ENCODE measurements at regions of chr3 and their contacts with region 1.

Region 1: DNA sequence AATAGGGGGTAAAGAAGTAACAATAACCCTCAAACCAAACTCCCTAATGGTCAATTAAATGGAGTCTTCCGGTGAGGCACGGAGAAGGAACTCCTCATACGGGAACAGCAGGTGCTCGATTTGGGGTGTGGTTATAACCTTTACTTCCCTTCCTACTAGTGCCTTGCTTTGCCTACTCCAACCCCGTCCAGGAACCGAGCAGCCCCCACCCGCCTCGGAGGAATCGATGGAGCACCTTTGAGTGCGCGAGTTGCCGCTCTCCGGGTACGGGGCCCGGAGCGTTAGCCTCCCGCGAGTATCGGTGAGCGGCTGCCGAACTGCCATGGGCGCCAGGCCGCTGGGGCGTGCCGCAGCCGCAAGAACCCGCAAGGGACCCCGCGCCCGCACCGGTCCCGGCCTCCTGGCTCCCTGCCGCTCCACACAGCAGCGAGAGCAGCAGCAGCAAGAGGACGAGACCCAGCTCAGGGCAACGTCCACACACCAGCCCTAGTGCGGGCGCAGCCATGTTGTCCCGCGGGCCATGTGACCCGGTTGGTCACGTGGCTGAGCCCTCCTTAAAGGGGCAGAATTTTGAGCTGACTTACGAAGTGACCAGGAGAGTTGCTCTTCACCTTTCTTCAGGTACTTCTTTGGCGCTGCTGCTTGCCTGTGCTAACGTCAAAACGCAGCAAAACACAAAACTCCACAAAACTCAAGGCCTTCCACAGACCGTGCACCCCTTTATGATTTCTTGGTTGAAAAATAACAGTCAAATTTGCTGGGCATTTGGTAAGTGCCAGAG is at the start of gene SUMF1:
- DNase-seq: peak; percentile 46 to 90
- H3K4me3 ChIP-seq: peak within 1 kb of the TSS; percentile 70
- H3K27ac ChIP-seq: peak within 1 kb of the TSS; percentile 48 to 75
- H3K4me1 ChIP-seq: peaks cover 4 to 11% of the 10 kb centered on the region in 2 donors
- H3K27me3 ChIP-seq: no peaks in the 10 kb centered on the region
- CTCF ChIP-seq: no peak
- total RNA-seq, gene SUMF1: 98.4 TPM

Region 2: GRCh38 chr3:4478261-4478660 is 11.3 kb after region 1 on chr3:
- intact Hi-C with region 1: no loop called
- DNase-seq: no peak
- H3K4me3 ChIP-seq: no peak overlapping the region
- H3K27ac ChIP-seq: no peak overlapping the region
- H3K4me1 ChIP-seq: peaks cover 0 to 10% of the 10 kb centered on the region in 2 donors
- H3K27me3 ChIP-seq: no peaks in the 10 kb centered on the region
- CTCF ChIP-seq: no peak

Region 3: DNA sequence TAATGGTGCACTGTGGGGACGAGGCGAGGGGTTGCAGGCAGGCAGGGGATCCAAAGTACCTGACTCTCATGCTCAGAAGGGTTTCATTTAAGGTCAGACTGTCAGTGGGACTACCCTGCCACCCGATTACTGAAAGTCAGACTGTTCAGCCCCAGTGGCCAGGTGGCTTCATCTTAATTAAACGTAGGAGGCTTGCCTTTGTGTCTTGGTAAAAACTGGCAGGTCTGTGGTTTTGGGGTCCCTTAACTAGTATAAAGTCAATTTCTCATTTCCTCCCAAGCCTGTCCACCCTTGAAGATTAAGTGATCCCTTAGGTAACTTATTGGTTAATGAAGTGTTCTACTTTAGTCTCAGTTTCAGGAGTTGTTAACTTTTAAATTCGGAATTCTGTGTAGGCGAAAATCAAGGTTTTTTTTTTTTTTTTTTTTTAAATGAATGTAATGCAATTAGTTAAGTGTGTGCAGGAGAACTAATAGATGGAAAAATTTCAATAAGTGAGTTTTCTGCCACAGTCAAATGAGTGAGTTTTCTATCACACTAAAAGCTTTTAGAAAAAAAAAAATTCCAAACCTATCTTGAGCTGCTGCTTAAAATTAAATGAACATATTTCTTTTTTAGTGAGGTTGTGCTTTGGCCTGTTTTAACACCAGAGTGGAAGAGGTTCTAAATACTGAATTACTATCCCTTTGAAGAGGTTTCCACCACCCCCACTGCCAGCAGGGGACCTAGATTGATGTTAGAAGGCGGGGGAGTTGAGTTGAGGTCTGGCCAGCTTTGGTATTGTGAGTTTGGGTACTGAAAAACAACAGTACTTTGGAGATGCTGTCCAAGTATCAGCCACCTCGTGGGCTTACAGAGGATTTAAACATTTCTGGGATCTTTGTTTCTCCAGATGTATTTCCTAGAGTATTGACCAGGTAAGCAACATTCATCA is 41.4 kb after region 1 on chr3:
- intact Hi-C with region 1: no loop called
- DNase-seq: no peak
- H3K4me3 ChIP-seq: no peak overlapping the region
- H3K27ac ChIP-seq: no peak overlapping the region
- H3K4me1 ChIP-seq: peaks cover 10 to 32% of the 10 kb centered on the region in 2 donors
- H3K27me3 ChIP-seq: no peaks in the 10 kb centered on the region
- CTCF ChIP-seq: no peak

Region 4: GRCh38 chr3:4584456-4585249 is 117.7 kb after region 1 on chr3:
- intact Hi-C with region 1: loop called (anchors 1 kb)
- DNase-seq: no peak
- H3K4me3 ChIP-seq: peak overlapping the region; percentile 43 to 57
- H3K27ac ChIP-seq: peak overlapping the region; percentile 84 to 86
- H3K4me1 ChIP-seq: peaks cover 0 to 41% of the 10 kb centered on the region in 2 donors
- H3K27me3 ChIP-seq: no peaks in the 10 kb centered on the region
- CTCF ChIP-seq: peak in 2 of 3 experiments; percentile 39 to 55

Region 5: GRCh38 chr3:4687167-4687566 is 220.2 kb after region 1 on chr3:
- intact Hi-C with region 1: no loop called
- DNase-seq: no peak
- H3K4me3 ChIP-seq: no peak overlapping the region
- H3K27ac ChIP-seq: no peak overlapping the region
- H3K4me1 ChIP-seq: no peaks in the 10 kb centered on the region
- H3K27me3 ChIP-seq: no peaks in the 10 kb centered on the region
- CTCF ChIP-seq: no peak